ENCODE measurements at regions of chr9 and their contacts with region 1.

Region 1: GRCh38 chr9:35161713-35162604 is at the start of gene UNC13B:
- DNase-seq: peak; percentile 69
- H3K4me3 ChIP-seq: peak within 1 kb of the TSS; percentile 85
- CTCF ChIP-seq: no peak

Region 2: DNA sequence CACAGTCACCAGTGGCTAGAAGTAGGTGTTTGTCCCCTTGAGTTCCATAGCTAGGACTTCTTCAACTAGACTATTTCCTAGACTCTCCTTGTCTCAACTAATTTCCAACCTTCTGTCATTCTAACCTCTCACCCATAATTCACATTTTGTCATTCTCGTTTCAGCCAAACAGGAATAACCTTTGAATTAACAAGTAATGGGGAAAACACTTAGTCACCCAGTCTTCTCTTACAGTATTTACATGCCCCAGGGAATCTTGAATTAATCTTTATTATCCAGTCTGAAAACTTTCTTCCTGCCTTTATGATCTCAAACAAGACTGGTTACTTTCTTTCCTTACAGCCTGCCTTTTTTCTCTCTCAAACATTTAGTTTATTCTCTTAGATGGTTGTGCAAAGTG is 264.7 kb after region 1 on chr9:
- in situ Hi-C with region 1: loop called (anchors 25 kb)
- DNase-seq: no peak
- H3K4me3 ChIP-seq: no peak overlapping the region
- CTCF ChIP-seq: no peak